ENCODE measurements at regions of chr17 and their contacts with region 1.

Region 1: DNA sequence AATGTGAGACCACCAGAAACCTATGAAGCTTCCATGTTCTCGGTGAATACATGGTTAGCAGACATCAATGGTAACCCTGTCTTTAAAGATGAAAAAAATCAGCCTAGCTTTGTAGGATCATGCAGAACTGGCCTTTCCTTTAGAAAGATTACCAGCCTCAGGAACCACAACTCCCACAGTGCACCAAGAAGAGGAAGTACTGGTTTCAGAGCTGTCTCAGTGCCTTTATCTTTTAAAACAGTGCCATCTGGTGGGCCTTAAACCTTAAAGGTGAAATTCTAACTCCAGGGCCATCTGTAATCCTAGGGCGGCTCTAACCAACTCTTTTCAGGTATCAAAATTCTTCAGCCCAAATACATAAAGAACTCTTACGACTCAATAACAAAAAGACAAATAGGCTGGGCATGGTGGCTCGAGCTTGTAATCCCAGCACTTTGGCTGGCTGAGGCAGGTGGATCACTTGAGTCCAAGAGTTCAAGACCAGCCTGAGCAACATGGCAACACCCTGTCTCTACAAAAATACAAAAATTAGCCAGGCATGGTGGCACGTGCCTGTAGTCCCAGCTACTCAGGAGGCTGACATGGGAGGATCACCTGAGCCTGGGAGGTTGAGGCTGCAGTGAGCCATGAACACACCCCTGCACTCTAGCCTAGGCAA is 5.4 kb downstream of the ATPAF2 start:
- DNase-seq: peak; percentile 86
- ATAC-seq: peak; percentile 72
- H3K4me3 ChIP-seq: no peak overlapping the region
- H3K4me3 Mint-ChIP-seq: no peak overlapping the region
- H3K27ac ChIP-seq: no peak overlapping the region
- H3K27ac Mint-ChIP-seq: peak overlapping the region; percentile 82
- H3K4me1 ChIP-seq: peaks cover 16 to 39% of the 10 kb centered on the region in 2 donors
- H3K4me1 Mint-ChIP-seq: peaks cover 54% of the 10 kb centered on the region
- H3K27me3 ChIP-seq: no peaks in the 10 kb centered on the region
- H3K27me3 Mint-ChIP-seq: no peaks in the 10 kb centered on the region
- CTCF ChIP-seq: peak; percentile 73

Region 2: DNA sequence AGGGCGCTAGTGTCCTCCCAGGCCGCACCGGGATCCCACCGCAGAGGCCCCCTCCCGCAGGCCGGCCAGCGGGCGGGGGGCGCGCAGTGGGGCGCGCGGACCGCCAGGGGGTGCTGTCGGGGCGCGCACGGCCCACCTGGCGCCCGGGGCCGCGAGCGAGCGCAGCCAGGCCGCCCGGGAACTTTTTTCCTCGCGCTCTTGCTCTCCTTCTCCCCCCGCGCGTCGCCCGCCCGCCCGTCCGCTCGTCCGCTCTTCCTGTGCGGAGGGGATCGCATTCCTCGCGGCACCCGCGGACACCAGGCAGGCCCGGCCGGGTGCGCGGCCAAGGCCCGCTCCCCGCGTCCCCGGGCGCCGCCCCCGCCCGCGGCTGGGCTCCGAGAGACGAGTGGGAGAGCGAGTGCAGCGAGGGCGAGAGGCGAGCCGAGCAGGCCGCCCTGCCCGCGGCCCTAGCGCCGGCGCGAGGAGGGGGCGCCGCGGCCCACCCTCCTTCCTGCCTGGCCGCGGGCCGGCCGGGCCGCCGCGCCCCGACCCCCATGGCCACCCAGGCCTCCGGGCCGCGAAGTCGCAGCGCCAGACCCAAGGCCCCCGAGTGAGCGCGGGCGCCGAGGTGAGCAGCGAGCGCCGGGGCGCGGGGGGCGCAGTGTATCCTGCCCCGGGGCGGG is 352.3 kb before region 1 on chr17 and contains the start of gene RAI1:
- CTCF ChIA-PET with region 1: interaction called, 15 read pairs
- POLR2A ChIA-PET with region 1: no interaction called
- intact Hi-C with region 1: loop called (anchors 1 kb)
- DNase-seq: peak; percentile 90
- ATAC-seq: peak; percentile 64
- H3K4me3 ChIP-seq: peak within 1 kb of the TSS in 4 of 5 experiments; percentile 66 to 86 (median 72)
- H3K4me3 Mint-ChIP-seq: peak within 1 kb of the TSS; percentile 91
- H3K27ac ChIP-seq: peak within 1 kb of the TSS; percentile 86 to 97
- H3K27ac Mint-ChIP-seq: peak within 1 kb of the TSS; percentile 88
- H3K4me1 ChIP-seq: peaks cover 7 to 19% of the 10 kb centered on the region in 2 donors
- H3K4me1 Mint-ChIP-seq: peaks cover 30% of the 10 kb centered on the region
- H3K27me3 ChIP-seq: peaks cover 0 to 3% (median 0%) of the 10 kb centered on the region in 4 experiments
- H3K27me3 Mint-ChIP-seq: peaks cover 5% of the 10 kb centered on the region
- CTCF ChIP-seq: peak; percentile 74
- total RNA-seq, gene RAI1: 33.6 and 34.0 TPM in 2 replicates

Region 3: GRCh38 chr17:17729620-17730249 is 303.8 kb before region 1 on chr17:
- CTCF ChIA-PET with region 1: no interaction called
- POLR2A ChIA-PET with region 1: no interaction called
- intact Hi-C with region 1: loop called (anchors 1 kb)
- DNase-seq: peak; percentile 76
- ATAC-seq: peak; percentile 90
- H3K4me3 ChIP-seq: no peak overlapping the region
- H3K4me3 Mint-ChIP-seq: no peak overlapping the region
- H3K27ac ChIP-seq: no peak overlapping the region
- H3K27ac Mint-ChIP-seq: peak overlapping the region; percentile 12
- H3K4me1 ChIP-seq: peaks cover 9 to 20% of the 10 kb centered on the region in 2 donors
- H3K4me1 Mint-ChIP-seq: peaks cover 23% of the 10 kb centered on the region
- H3K27me3 ChIP-seq: no peaks in the 10 kb centered on the region
- H3K27me3 Mint-ChIP-seq: no peaks in the 10 kb centered on the region
- CTCF ChIP-seq: peak; percentile 81

Region 4: DNA sequence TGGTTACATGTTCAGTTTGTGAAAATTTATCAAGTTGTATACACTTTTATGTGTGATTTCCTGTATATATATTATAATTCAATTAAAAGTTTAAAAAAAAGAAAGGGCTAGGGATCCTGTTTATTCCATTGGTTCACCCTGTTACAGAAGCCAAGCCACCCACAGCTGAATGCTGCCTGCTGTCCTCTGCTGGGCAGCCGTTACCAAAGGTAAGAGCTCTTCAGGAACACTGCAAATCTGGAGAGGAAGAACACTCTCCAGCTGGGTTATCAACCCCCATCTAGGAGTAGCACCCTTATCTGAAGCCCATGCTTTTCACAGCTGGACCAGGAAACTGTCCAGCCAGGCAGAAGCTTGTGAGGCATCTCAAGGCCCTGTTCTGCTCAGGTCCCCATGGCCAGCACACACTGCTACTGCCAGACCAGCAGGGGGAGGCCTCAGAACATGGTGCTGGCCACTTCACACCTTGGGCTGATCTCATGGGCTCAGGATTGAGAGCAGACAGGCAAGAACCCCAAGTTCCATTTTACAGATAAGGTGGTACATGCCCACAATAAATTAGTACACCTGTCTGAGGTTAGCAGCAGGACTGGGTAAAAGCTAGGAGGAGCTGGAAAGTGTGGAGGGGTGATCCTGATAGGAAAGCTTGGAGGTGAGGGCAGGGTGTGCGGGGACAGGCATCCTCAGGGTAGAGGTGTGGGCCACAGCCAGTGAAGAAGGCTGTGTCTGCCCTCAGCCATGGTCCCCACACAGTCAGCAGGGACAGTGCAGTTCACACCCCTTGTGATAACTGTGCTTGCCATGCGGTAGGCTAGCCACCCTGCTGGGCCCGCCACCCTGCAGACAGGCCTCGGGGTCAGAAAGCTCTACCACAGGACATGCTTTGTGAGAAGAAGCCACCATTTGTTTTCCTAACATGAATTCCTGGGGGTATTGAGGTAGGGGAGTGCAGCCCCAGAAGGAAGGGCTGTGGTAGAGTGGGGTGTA is 142.5 kb before region 1 on chr17:
- CTCF ChIA-PET with region 1: interaction called, 8 read pairs
- POLR2A ChIA-PET with region 1: no interaction called
- intact Hi-C with region 1: loop called (anchors 2 kb)
- DNase-seq: peak; percentile 23
- ATAC-seq: no peak
- H3K4me3 ChIP-seq: no peak overlapping the region
- H3K4me3 Mint-ChIP-seq: no peak overlapping the region
- H3K27ac ChIP-seq: no peak overlapping the region
- H3K27ac Mint-ChIP-seq: no peak overlapping the region
- H3K4me1 ChIP-seq: peaks cover 0 to 9% of the 10 kb centered on the region in 2 donors
- H3K4me1 Mint-ChIP-seq: peaks cover 9% of the 10 kb centered on the region
- H3K27me3 ChIP-seq: no peaks in the 10 kb centered on the region
- H3K27me3 Mint-ChIP-seq: no peaks in the 10 kb centered on the region
- CTCF ChIP-seq: no peak

Measured in B cell (primary cell).